Esophagus muscularis mucosa (tissue), 4 donors: ENCODE measurements at regions of chr4 and their contacts with region 1.

Region 1: DNA sequence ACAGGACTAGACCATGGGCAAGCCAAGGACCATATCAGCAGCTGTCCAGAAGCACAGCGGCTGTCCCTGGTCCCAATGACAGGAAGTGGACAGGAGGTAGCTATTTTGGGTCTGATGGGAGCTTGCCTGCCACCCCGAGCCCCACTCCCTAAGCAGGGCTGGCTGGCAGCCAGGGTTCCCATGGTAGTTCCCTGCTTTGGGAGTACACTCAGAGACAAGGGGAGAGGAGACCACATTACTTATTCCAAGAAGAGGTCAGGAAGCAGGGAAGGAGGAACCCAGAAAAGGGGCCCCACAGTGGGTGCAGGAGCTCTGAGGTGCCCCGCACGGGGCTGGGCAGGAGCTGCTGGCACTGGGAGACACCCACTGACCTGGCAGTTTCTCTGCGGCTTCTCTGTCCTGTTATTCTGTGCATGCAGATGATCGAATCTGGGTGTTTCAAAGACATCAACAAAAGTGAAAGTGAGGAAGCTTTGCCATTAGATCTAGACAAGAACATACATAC is 36.3 kb downstream of the HTT-AS start:
- DNase-seq: no peak
- H3K4me3 ChIP-seq: peak overlapping the region; percentile 34 to 46 (median 39)
- H3K27ac ChIP-seq: no peak overlapping the region
- H3K4me1 ChIP-seq: peaks cover 21 to 46% (median 38%) of the 10 kb centered on the region in 4 donors
- H3K27me3 ChIP-seq: peaks cover 0 to 17% (median 0%) of the 10 kb centered on the region in 4 donors
- CTCF ChIP-seq: no peak
- EP300 ChIP-seq: no peak
- POLR2A ChIP-seq: no peak

Region 2: GRCh38 chr4:2977211-2978088 is 60.6 kb before region 1 on chr4:
- intact Hi-C with region 1: loop called (anchors 5 kb)
- DNase-seq: no peak
- H3K4me3 ChIP-seq: no peak overlapping the region
- H3K27ac ChIP-seq: no peak overlapping the region
- H3K4me1 ChIP-seq: peaks cover 0 to 3% (median 0%) of the 10 kb centered on the region in 4 donors
- H3K27me3 ChIP-seq: no peaks in the 10 kb centered on the region
- CTCF ChIP-seq: no peak
- EP300 ChIP-seq: no peak
- POLR2A ChIP-seq: no peak

Region 3: DNA sequence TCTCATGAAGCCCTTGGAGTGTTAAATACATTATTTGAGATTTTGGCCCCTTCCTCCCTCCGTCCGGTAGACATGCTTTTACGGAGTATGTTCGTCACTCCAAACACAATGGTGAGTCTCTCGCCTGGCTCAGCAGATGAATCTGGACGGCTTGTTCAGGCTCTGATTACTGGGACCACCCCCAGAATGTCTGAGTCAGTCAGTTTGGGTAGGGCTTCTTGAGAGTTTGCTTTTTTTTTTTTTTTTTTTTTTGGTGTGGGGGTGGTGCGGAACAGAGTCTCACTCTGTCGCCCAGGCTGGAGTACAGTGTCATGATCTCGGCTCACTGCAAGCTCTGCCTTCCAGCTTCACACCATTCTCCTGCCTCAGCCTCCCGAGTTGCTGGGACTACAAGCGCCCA is 148.6 kb after region 1 on chr4:
- intact Hi-C with region 1: no loop called
- DNase-seq: no peak
- H3K4me3 ChIP-seq: no peak overlapping the region
- H3K27ac ChIP-seq: no peak overlapping the region
- H3K4me1 ChIP-seq: peaks cover 0 to 11% (median 5%) of the 10 kb centered on the region in 4 donors
- H3K27me3 ChIP-seq: no peaks in the 10 kb centered on the region
- CTCF ChIP-seq: no peak
- EP300 ChIP-seq: no peak
- POLR2A ChIP-seq: no peak